ENCODE measurements at regions of chr9 and their contacts with region 1.

Region 1: DNA sequence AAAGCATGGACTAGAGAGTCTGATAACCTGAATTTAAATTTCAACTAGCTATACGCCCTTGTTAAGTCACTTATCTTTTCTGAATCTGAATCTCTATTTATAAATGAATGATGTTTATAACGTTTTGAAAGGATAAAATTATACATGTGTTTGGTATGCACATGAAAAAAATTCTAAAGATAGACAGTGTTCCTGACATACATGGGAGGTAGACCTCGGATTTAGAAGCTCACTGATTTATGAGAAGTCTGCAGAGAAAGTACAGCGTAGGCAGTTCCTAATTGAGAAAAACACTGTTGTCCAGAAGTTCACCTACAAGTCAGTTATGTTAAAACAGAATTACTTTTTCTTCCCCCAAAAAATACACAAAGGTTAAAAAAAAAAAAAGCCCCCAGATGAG is 26.6 kb downstream of the MPDZ start:
- DNase-seq: no peak
- ATAC-seq: no peak
- H3K4me3 ChIP-seq: no peak overlapping the region
- H3K27ac ChIP-seq: no peak overlapping the region
- H3K4me1 ChIP-seq: peaks cover 0 to 21% (median 14%) of the 10 kb centered on the region in 9 donors
- H3K27me3 ChIP-seq: no peaks in the 10 kb centered on the region
- CTCF ChIP-seq: no peak

Region 2: DNA sequence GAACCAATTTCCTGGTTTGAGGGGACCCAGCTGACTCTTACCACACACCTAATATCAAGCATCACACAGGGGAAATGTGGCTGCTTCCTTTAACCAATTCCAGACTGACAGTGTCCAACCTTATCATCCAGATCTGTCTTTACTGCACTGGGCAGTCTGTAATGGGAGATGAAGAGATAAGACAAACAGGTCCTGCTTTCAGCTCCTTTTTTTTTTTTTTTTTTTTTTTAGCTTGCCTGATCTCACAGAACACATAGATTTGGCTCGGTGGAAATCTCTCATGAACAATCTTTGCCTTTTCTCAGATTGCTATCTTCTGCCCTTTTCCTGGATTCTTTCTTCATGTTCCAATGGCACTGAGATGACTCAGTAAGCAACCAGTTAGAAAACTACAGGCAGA is 758.4 kb before region 1 on chr9:
- intact Hi-C with region 1: no loop called
- DNase-seq: no peak
- ATAC-seq: no peak
- H3K4me3 ChIP-seq: no peak overlapping the region
- H3K27ac ChIP-seq: no peak overlapping the region
- H3K4me1 ChIP-seq: no peaks in the 10 kb centered on the region
- H3K27me3 ChIP-seq: no peaks in the 10 kb centered on the region
- CTCF ChIP-seq: no peak

Region 3: DNA sequence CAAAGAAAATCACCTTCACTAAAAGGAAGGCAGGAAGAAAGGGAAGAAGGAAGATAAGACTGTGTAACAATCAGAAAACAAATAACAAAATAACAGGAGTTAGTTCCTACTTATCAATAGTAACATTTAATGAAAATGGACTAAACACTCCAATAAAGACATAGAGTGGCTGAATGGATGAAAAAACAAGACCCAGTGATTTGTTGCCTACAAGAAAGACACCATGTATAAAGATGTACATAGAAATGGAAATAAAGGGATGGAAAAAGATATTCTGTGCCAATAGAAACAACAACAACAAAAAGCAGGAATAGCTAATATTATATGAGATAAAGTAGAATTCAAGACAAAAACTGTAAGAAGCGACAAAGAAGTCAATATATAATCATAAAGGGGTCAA is 361.3 kb before region 1 on chr9:
- intact Hi-C with region 1: no loop called
- DNase-seq: no peak
- ATAC-seq: no peak
- H3K4me3 ChIP-seq: no peak overlapping the region
- H3K27ac ChIP-seq: no peak overlapping the region
- H3K4me1 ChIP-seq: no peaks in the 10 kb centered on the region
- H3K27me3 ChIP-seq: no peaks in the 10 kb centered on the region
- CTCF ChIP-seq: no peak

Region 4: GRCh38 chr9:13318027-13318426 is 65.2 kb after region 1 on chr9:
- intact Hi-C with region 1: loop called in 1 of 10 experiments (anchors 10 kb)
- DNase-seq: no peak
- ATAC-seq: no peak
- H3K4me3 ChIP-seq: no peak overlapping the region
- H3K27ac ChIP-seq: no peak overlapping the region
- H3K4me1 ChIP-seq: no peaks in the 10 kb centered on the region
- H3K27me3 ChIP-seq: no peaks in the 10 kb centered on the region
- CTCF ChIP-seq: no peak

Region 5: DNA sequence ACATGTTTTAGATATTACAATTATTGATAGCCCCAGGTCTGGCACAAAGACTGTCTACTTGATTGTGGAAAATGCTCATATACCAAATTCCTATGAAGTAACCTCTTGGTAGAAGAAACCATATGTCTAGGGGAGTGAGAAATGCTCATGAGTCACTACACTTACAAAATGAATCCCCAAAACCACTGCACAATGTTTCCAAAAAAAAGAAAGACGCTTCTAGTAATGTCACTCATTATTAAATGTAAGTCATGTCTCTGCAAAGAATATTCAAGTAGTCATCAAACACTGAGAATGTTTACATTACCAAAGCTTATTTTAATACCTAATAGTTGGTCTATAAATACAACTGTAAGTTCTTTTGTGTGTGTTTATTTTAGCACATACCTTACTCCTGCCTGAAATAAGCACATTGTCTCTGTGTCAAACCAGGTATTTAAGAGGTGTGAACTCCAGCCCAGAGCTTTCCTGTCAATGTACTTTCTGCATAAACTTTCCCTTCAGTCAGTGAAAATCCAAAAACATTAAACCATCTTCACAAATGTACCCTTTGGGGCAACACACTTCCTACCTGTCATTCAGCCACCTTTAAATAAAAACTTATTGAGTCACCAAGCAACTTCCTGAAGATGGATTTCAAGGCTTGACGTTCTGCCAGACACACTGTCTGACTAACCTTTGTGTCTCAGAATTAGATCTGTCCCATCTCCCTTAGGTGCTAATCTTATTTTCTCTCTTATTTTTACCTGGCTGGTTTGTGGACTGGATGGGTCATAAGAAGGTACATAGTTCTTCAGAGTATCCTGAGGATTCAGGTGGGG is 867.1 kb after region 1 on chr9:
- intact Hi-C with region 1: loop called in 1 of 10 experiments (anchors 10 kb)
- DNase-seq: no peak
- ATAC-seq: no peak
- H3K4me3 ChIP-seq: no peak overlapping the region
- H3K27ac ChIP-seq: peak overlapping the region in 1 of 10 donors; percentile 32
- H3K4me1 ChIP-seq: peaks cover 0 to 5% (median 0%) of the 10 kb centered on the region in 9 donors
- H3K27me3 ChIP-seq: no peaks in the 10 kb centered on the region
- CTCF ChIP-seq: no peak

Measured in heart right ventricle (tissue), 16 donors.